ENCODE measurements at regions of chr19 and their contacts with region 1.

Region 1: GRCh38 chr19:4732680-4733114 is 9.1 kb upstream of the DPP9 start:
- DNase-seq: peak; percentile 83
- H3K4me3 ChIP-seq: no peak overlapping the region
- H3K27ac ChIP-seq: no peak overlapping the region
- H3K4me1 ChIP-seq: peaks cover 3% of the 10 kb centered on the region
- H3K27me3 ChIP-seq: no peaks in the 10 kb centered on the region
- CTCF ChIP-seq: peak; percentile 76

Region 2: DNA sequence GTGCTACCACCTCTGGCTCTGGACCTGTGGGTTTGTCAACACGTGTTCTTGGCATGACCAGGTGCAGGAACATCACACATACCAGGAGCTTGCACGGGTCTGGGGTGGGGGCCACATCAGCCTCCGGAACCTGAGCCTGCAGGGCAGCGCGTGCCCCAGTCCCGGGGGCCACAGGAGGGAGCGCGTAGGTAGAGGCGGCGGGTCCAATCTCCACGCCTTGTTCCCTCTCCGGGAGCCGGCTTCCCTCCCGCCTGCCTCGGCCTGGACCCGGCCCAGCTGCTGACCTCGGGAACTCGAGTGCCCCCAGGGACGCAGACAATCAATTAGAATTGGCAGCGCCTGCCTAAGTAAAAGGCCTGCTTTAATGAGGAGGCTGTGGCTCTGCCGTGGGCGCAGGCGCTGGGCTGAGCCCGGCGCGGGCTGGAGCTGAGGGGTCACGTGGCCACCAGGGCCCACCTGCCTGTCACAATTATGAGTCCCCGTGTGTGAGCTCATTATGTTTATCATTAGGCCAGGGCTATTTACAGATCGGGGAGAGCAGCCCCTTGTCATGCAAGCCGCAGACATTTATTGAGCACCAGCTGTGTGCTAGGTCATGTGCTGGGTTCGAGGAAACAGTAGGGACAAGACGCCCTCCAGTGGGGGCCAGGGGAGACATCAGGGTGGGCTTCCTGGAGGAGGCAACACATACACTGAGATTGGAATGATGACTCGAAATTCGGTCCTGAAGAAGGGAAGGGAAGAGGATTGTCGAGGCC is 125.6 kb before region 1 on chr19:
- CTCF ChIA-PET with region 1: no interaction called
- POLR2A ChIA-PET with region 1: no interaction called
- intact Hi-C with region 1: no loop called
- DNase-seq: peak; percentile 53
- H3K4me3 ChIP-seq: no peak overlapping the region
- H3K27ac ChIP-seq: no peak overlapping the region
- H3K4me1 ChIP-seq: peaks cover 7% of the 10 kb centered on the region
- H3K27me3 ChIP-seq: no peaks in the 10 kb centered on the region
- CTCF ChIP-seq: no peak

Region 3: DNA sequence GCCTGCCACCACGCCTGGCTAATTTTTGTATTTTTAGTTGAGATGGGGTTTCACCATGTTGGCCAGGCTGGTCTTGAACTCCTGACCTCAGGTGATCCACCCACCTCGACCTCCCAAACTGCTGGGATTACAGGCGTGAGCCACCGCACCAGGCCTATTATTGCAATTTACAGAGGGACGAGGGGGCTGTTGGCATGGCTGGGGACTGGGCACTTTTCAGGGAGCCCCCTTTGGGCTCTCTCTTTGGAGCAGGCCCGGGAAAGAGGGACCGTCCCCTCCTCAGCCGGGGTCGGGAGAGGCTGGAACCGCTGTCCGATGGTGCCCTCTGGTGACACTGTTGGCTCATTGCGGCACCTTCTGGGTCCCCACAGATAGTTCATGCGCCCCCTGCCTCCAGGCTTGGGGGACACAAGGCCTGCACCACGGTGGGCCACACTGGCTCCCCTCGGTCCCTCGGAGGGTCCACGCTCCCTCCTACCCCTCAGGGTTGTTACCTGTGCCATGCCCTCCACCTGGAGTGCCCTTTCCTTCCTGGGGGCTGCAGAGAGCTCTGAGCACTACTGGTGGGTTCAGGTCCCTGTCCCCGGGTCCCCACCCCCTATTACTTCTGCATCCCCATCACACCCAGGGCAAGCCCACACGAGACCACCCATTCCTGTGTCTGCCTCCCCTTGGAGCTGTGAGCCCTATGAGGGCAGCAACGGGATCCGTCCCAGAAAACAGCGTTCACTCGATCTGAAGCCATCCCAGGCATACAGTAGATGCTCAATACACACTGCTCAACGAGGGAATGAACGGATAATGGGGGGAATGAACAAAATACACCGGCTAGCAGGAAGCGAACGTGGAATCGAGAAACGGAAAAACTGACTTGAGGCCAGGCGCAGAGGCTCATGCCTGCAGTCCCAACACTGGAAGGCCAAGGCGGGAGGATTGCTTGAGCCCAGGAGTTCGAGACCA is 71.3 kb after region 1 on chr19:
- CTCF ChIA-PET with region 1: no interaction called
- POLR2A ChIA-PET with region 1: no interaction called
- intact Hi-C with region 1: loop called (anchors 1 kb)
- DNase-seq: peak; percentile 82
- H3K4me3 ChIP-seq: no peak overlapping the region
- H3K27ac ChIP-seq: no peak overlapping the region
- H3K4me1 ChIP-seq: no peaks in the 10 kb centered on the region
- H3K27me3 ChIP-seq: no peaks in the 10 kb centered on the region
- CTCF ChIP-seq: peak; percentile 93

Region 4: DNA sequence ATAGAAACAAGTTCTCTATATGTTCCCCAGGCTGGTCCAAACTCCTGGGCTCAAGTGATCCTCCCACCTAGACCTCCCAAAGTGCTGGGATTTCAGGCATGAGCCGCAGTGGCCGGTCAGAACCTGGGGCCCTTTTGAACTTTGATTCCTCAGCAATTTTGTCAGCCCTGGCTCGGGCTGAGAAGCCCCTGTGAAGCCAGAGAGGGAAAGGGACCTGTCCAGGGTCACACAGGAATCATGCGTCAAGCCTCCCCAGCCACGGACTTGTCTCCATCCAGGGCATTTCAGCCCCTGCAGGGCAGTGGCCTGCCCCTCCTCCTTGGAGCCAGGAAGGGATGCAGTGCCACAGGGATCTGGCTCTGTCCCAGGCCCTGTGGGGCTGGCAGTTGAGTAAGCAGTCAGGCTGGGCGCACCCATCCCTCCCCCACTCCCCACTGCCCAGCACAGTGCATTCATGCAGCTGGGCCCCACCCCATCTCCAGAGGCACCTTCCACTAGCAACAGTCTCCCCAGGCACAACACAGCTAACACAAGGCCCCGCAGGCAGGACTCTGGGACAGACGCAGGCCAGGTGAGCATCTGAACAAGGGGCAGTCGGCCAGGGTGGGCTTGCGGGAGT is 1181.2 kb after region 1 on chr19 and contains the start of gene CAPS:
- CTCF ChIA-PET with region 1: no interaction called
- POLR2A ChIA-PET with region 1: no interaction called
- intact Hi-C with region 1: no loop called
- DNase-seq: no peak
- H3K4me3 ChIP-seq: no peak within 1 kb of the TSS
- H3K27ac ChIP-seq: no peak within 1 kb of the TSS
- H3K4me1 ChIP-seq: no peaks in the 10 kb centered on the region
- H3K27me3 ChIP-seq: no peaks in the 10 kb centered on the region
- CTCF ChIP-seq: no peak
- total RNA-seq, gene CAPS: 0.92 and 1.7 TPM in 2 replicates

Measured in A673 (cell line).